Activated CD4-positive, alpha-beta memory T cell treated with anti-CD3 and anti-CD28 coated beads, Interleukin-2, amount 10 ng/mL, durations not matched to agents 7 days and 5 days (primary cell): ENCODE measurements at regions of chr17 and their contacts with region 1.

Region 1: DNA sequence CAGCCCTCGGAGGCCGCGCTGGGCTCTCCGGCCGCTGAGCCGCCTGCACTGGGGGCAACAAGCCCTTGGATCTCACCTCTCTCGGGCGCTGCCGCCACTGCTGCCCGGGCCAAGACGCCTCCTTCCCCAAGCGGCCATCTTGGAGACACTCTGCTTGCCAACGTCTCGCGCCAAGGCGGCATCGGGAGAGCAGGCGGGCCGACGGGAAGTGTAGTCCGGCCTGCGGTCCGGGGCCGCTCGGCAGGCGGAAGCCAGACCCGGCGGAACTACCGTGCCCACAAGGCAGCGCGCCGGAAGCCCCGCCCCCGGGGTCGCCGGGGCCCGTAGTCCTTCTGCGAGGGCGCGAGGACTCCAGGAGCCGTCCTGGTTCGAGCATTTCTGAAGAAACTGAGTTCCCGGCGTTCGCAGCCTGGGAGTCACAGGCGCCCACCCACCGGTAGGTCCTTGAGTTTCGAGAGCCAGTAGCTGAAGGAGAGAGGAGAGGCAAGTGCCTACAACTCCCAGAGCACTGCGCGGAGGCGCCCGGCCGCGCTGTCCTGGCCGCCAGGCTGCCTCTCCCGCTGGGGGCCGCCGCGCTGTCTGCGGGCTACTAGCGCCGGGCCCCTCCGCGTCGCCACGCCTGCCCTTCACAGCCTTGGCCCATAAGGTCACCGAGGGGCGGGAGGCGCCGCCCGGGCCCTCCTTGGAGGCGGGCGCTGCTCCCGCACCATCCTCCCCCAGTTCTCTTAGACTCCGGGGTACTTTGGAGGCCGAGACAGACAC is at the start of gene TMEM11:
- DNase-seq: peak; percentile 96
- H3K4me3 Mint-ChIP-seq: peak within 1 kb of the TSS; percentile 86
- H3K27ac Mint-ChIP-seq: peak within 1 kb of the TSS; percentile 81
- H3K4me1 Mint-ChIP-seq: peaks cover 66% of the 10 kb centered on the region
- H3K27me3 Mint-ChIP-seq: no peaks in the 10 kb centered on the region
- total RNA-seq, gene TMEM11: 23.2 to 23.3 TPM

Region 2: GRCh38 chr17:21105064-21105894 is 108.9 kb before region 1 on chr17:
- CTCF ChIA-PET with region 1: no interaction called
- POLR2A ChIA-PET with region 1: no interaction called
- DNase-seq: no peak
- H3K4me3 Mint-ChIP-seq: no peak overlapping the region
- H3K27ac Mint-ChIP-seq: no peak overlapping the region
- H3K4me1 Mint-ChIP-seq: no peaks in the 10 kb centered on the region
- H3K27me3 Mint-ChIP-seq: peaks cover 8% of the 10 kb centered on the region

Region 3: GRCh38 chr17:21119247-21119918 is 94.8 kb before region 1 on chr17:
- CTCF ChIA-PET with region 1: interaction called, 10 read pairs
- POLR2A ChIA-PET with region 1: interaction called, 6 read pairs
- DNase-seq: peak; percentile 76
- H3K4me3 Mint-ChIP-seq: no peak overlapping the region
- H3K27ac Mint-ChIP-seq: no peak overlapping the region
- H3K4me1 Mint-ChIP-seq: peaks cover 10% of the 10 kb centered on the region
- H3K27me3 Mint-ChIP-seq: peaks cover 4% of the 10 kb centered on the region

Region 4: GRCh38 chr17:21126645-21127510 is 87.3 kb before region 1 on chr17 and contains the start of gene DHRS7B:
- CTCF ChIA-PET with region 1: no interaction called
- POLR2A ChIA-PET with region 1: interaction called, 16 read pairs
- DNase-seq: peak; percentile 97
- H3K4me3 Mint-ChIP-seq: peak within 1 kb of the TSS; percentile 89
- H3K27ac Mint-ChIP-seq: peak within 1 kb of the TSS; percentile 86
- H3K4me1 Mint-ChIP-seq: peaks cover 35% of the 10 kb centered on the region
- H3K27me3 Mint-ChIP-seq: no peaks in the 10 kb centered on the region
- total RNA-seq, gene DHRS7B: 12.1 to 15.3 TPM

Region 5: GRCh38 chr17:21161498-21162393 is 52.5 kb before region 1 on chr17:
- CTCF ChIA-PET with region 1: no interaction called
- POLR2A ChIA-PET with region 1: no interaction called
- DNase-seq: no peak
- H3K4me3 Mint-ChIP-seq: no peak overlapping the region
- H3K27ac Mint-ChIP-seq: no peak overlapping the region
- H3K4me1 Mint-ChIP-seq: peaks cover 6% of the 10 kb centered on the region
- H3K27me3 Mint-ChIP-seq: no peaks in the 10 kb centered on the region

Region 6: DNA sequence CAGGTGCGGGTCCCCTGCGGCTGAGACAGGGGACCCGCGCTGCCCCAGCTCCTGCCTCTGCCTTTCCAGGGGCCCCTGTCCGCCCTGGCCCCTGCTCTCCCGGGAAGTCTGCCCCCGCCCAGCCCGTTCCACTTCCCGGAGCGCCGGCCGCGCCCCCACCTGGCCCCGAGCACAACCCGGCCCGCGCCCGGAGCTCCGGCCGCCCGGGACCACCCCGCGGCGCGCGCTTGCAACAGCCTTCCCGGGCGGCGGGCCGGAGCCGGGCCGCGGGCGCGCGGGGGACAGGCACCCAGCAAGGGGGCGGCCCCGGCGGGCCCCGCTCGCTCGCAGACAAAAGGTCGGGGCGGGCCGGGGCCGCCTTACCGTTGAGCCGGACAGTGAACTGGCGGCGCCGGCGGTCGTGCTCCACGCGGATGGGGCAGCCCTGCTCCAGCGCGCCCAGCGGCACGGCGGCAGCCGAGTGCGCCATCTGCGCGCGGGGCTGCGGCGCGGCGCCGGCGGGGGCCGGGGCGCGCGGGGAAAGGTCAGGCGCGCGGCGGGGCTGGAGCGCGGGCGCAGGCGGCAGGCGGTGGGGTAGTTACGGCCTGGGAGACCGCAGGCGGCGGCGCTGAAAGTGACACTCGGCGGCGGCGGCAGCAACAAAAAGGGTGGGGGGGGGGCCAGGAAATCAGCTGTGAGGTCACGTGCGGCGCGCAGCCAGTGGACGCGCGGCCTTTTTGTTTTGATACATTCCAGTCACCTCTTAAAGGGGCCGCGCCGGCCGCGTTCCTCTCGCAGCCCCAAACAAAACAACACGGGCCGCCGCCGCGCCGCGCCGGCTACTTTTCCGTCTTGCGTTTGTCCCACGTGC is 38.8 kb after region 1 on chr17 and contains the start of gene NATD1:
- CTCF ChIA-PET with region 1: interaction called, 4 read pairs
- POLR2A ChIA-PET with region 1: interaction called, 15 read pairs
- DNase-seq: peak; percentile 86
- H3K4me3 Mint-ChIP-seq: peak within 1 kb of the TSS; percentile 80
- H3K27ac Mint-ChIP-seq: peak within 1 kb of the TSS; percentile 31
- H3K4me1 Mint-ChIP-seq: peaks cover 17% of the 10 kb centered on the region
- H3K27me3 Mint-ChIP-seq: peaks cover 2% of the 10 kb centered on the region
- total RNA-seq, gene NATD1: 7.2 to 8.3 TPM

Region 7: GRCh38 chr17:21388066-21388465 is 173.9 kb after region 1 on chr17:
- CTCF ChIA-PET with region 1: no interaction called
- POLR2A ChIA-PET with region 1: no interaction called
- DNase-seq: no peak
- H3K4me3 Mint-ChIP-seq: no peak overlapping the region
- H3K27ac Mint-ChIP-seq: no peak overlapping the region
- H3K4me1 Mint-ChIP-seq: no peaks in the 10 kb centered on the region
- H3K27me3 Mint-ChIP-seq: no peaks in the 10 kb centered on the region